Heart right ventricle (tissue), 16 donors: ENCODE measurements at regions of chr10 and their contacts with region 1.

Region 1: GRCh38 chr10:13769955-13770354 is 183.2 kb downstream of the PRPF18 start:
- DNase-seq: no peak
- ATAC-seq: no peak
- H3K4me3 ChIP-seq: no peak overlapping the region
- H3K27ac ChIP-seq: no peak overlapping the region
- H3K4me1 ChIP-seq: peaks cover 3 to 19% (median 12%) of the 10 kb centered on the region in 9 donors
- H3K27me3 ChIP-seq: no peaks in the 10 kb centered on the region
- CTCF ChIP-seq: no peak

Region 2: DNA sequence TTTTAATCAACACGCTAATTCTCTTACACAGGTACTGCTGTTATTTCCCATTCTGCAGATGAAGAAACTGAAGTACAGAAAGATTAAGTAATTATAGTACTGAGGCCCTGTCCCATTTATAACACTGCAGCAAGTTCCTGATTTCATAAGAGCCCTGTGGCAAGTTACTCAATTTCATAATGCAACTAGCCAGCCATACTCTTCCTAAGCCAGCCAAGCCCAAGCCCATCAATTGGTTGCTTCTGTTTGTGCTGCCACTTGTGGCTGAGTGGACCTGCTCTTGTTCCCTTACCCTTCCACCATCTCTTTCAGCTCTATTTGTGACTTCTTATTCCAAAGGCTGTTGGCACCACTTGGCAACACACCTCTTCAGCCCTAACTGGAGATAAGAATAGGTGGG is 202.9 kb before region 1 on chr10:
- intact Hi-C with region 1: no loop called
- DNase-seq: no peak
- ATAC-seq: no peak
- H3K4me3 ChIP-seq: no peak overlapping the region
- H3K27ac ChIP-seq: no peak overlapping the region
- H3K4me1 ChIP-seq: peaks cover 0 to 4% (median 0%) of the 10 kb centered on the region in 9 donors
- H3K27me3 ChIP-seq: peaks cover 0 to 7% (median 0%) of the 10 kb centered on the region in 7 donors
- CTCF ChIP-seq: no peak

Region 3: GRCh38 chr10:13717931-13718772 is 51.8 kb before region 1 on chr10:
- intact Hi-C with region 1: loop called in 5 of 10 experiments (anchors 5 to 10 kb)
- DNase-seq: peak; percentile 76 to 80
- ATAC-seq: peak; percentile 73 to 86 (median 80)
- H3K4me3 ChIP-seq: peak overlapping the region in 9 of 10 donors; percentile 24 to 45 (median 40)
- H3K27ac ChIP-seq: peak overlapping the region; percentile 72 to 85 (median 76)
- H3K4me1 ChIP-seq: peaks cover 0 to 43% (median 31%) of the 10 kb centered on the region in 9 donors
- H3K27me3 ChIP-seq: no peaks in the 10 kb centered on the region
- CTCF ChIP-seq: no peak